Activated CD4-positive, alpha-beta T cell treated with anti-CD3 and anti-CD28 coated beads, Interleukin-2, amount 10 ng/mL, durations not matched to agents 24 days and 14 days (primary cell): ENCODE measurements at regions of chr2 and their contacts with region 1.

Region 1: DNA sequence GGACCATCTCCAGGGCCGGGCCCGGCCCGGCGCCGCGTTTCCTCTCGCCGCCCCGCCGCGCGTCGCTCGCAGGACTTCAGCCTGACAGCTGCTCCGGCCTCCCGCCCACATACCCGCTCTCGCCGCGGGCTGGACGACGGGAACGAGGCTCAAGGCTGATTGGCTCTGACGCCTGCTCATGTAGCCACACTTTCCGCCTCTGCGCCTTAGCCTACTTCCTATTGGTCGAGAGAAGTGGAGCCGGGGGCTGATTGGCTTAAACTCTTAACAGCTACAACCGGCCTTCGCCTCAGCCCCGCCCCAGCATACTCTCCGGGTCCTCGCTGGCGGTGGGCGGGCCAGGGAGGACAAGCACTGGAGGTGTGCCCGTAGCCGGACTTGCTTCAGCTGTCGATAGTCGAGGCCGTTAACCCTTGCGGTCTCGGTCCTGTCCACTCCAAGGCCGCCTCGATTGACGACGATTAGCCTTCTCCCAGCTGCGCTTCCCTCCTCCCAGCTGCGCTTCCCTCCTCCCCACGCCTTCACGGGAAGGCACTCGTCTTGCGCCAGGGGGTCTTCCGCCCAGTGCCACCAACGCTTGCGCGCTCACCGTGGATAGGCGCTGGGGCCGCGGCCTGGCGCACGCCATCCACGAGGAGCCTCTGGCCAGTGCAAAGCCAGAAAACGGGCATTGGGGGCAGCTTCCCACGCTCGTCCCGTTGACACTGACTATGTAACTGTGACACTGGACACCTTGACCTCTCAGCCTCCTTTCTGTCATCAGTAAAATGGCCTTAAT is at the start of gene PRADC1:
- DNase-seq: peak; percentile 99
- H3K4me3 Mint-ChIP-seq: peak within 1 kb of the TSS; percentile 94
- H3K27ac Mint-ChIP-seq: peak within 1 kb of the TSS; percentile 95
- H3K4me1 Mint-ChIP-seq: peaks cover 36% of the 10 kb centered on the region
- H3K27me3 Mint-ChIP-seq: no peaks in the 10 kb centered on the region
- total RNA-seq, gene PRADC1: 14.8 and 15.9 TPM in 2 replicates

Region 2: GRCh38 chr2:72963423-72964145 is 269.8 kb before region 1 on chr2:
- intact Hi-C with region 1: no loop called
- DNase-seq: no peak
- H3K4me3 Mint-ChIP-seq: no peak overlapping the region
- H3K27ac Mint-ChIP-seq: no peak overlapping the region
- H3K4me1 Mint-ChIP-seq: peaks cover 7% of the 10 kb centered on the region
- H3K27me3 Mint-ChIP-seq: no peaks in the 10 kb centered on the region

Region 3: GRCh38 chr2:73071360-73072133 is 161.8 kb before region 1 on chr2 and contains the start of gene SFXN5:
- intact Hi-C with region 1: loop called (anchors 1 kb)
- DNase-seq: peak; percentile 99
- H3K4me3 Mint-ChIP-seq: peak within 1 kb of the TSS; percentile 89
- H3K27ac Mint-ChIP-seq: peak within 1 kb of the TSS; percentile 92
- H3K4me1 Mint-ChIP-seq: peaks cover 20% of the 10 kb centered on the region
- H3K27me3 Mint-ChIP-seq: peaks cover 12% of the 10 kb centered on the region
- total RNA-seq, gene SFXN5: 11.6 and 14.1 TPM in 2 replicates

Region 4: GRCh38 chr2:73212448-73213176 is 20.7 kb before region 1 on chr2:
- intact Hi-C with region 1: loop called (anchors 1 kb)
- DNase-seq: peak; percentile 91
- H3K4me3 Mint-ChIP-seq: no peak overlapping the region
- H3K27ac Mint-ChIP-seq: peak overlapping the region; percentile 34
- H3K4me1 Mint-ChIP-seq: peaks cover 22% of the 10 kb centered on the region
- H3K27me3 Mint-ChIP-seq: peaks cover 6% of the 10 kb centered on the region

Region 5: DNA sequence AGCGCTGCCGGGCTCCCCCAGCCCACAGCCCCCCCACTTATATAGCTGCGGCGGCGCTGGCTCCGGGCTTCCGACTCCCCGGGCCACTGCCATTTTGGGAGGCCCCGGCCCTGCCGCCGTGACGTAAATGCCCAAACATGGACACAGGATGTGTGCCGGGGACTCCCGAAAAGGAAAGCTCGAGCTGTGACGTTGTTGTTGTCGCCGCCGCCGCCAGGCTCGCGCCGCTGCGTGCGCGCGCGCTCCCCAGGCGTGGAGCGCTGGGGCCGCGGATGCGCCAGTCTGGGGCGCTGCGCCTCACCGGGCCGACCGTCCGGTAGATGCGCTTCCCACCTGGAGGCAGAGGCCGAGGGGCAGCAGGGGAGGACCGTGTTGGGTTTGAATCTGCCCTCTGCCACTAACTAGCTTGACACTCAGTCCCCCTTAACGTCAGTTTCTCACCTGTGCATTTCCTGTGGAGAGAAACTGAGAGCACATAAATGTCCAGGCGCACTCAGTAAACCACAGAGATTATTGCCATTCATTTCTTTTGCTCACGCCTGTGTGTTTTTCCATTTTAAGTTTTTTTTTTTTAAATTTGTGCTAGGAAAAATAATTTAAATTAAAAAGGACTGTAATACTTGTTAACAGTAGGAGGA is 60.3 kb after region 1 on chr2 and contains the start of gene EGR4:
- intact Hi-C with region 1: loop called (anchors 1 kb)
- DNase-seq: peak; percentile 98
- H3K4me3 Mint-ChIP-seq: peak within 1 kb of the TSS; percentile 81
- H3K27ac Mint-ChIP-seq: no peak within 1 kb of the TSS
- H3K4me1 Mint-ChIP-seq: peaks cover 13% of the 10 kb centered on the region
- H3K27me3 Mint-ChIP-seq: peaks cover 74% of the 10 kb centered on the region
- total RNA-seq, gene EGR4: 1.2 and 1.5 TPM in 2 replicates

Region 6: DNA sequence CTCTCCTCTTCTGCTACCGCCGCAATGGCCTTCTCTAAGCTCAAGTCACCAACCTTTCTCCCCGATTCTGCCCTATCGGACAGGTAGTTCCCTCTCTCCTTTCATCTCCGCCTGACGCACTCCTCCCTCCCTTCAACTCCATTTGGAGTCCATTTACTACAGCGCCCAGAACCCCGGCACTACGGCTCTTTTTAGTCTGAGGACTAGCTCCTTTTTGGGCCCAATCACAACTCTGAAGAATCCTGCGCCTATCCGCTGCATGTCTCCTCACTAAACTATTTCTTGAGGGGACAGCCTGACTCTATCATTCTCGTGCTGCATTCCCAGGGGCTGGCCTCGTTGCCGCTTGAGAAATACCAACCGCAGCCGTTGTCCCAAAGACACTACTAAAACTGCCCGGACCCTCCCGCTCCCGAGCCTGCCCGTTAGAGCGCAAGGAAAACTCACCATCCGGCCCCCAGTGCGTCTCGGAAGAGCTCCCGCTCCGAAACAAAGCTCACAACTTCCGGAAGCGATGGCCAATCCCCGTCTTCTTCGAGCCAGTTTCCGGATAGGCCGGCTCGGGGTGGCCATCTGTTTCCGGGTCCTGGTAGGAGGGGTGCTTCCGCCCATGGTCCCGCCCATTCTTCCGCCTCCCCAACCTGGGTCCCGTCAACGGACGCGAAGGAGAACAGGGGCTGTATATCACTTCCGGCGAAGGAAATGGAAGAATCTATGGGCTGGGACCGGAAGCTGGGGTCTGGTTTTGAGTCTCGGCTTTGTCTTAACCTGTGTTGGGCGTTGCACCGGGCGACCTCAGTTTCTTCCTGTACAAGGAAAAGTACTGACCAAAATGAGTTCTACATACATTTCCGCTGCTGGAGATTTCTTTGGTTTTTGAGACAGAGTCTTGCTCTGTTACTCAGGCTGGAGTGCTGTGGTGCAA is 503.8 kb after region 1 on chr2 and contains the start of gene TPRKB:
- intact Hi-C with region 1: loop called (anchors 1 kb)
- DNase-seq: peak; percentile 98
- H3K4me3 Mint-ChIP-seq: peak within 1 kb of the TSS; percentile 100
- H3K27ac Mint-ChIP-seq: peak within 1 kb of the TSS; percentile 91
- H3K4me1 Mint-ChIP-seq: peaks cover 10% of the 10 kb centered on the region
- H3K27me3 Mint-ChIP-seq: no peaks in the 10 kb centered on the region
- total RNA-seq, gene TPRKB: 37.6 and 38.5 TPM in 2 replicates

Region 7: DNA sequence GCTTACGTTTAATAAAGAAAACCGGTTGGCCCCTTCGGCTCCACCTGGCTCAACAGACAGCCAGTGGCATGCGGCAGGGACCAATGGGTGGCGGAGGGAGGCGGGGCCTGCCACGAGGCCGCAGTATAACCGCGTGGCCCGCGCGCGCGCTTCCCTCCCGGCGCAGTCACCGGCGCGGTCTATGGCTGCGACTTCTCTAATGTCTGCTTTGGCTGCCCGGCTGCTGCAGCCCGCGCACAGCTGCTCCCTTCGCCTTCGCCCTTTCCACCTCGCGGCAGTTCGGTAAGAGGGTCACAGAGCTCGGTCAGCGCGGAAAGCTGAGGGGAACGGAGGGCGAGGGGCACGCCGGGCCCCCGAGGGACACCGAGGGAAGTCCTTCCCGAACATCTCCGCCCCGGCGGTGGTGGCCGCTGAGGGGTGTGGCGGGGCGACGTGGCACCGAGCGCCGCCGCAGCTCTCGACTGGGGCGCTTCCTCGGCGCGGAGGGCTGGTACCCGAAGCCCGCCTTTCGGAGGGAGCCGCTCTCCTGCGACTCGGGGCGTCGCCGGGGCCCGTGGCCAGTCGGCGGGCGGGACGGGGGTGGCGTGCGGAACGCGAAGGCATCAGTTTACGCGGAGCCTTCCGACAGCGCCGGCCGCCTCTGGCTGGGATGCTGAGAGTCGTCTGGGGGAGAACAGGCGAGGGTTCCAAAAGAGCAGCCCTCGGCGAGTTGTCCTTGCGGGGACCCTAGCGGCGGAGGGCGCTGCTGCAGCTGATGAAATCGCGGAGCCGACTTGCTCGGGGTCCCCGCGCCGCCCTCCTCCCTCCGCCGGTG is 965.3 kb after region 1 on chr2 and contains the start of gene MTHFD2:
- intact Hi-C with region 1: loop called (anchors 2 kb)
- DNase-seq: peak; percentile 98
- H3K4me3 Mint-ChIP-seq: peak within 1 kb of the TSS; percentile 96
- H3K27ac Mint-ChIP-seq: peak within 1 kb of the TSS; percentile 100
- H3K4me1 Mint-ChIP-seq: peaks cover 38% of the 10 kb centered on the region
- H3K27me3 Mint-ChIP-seq: no peaks in the 10 kb centered on the region
- total RNA-seq, gene MTHFD2: 418 and 439 TPM in 2 replicates